Sciatic nerve (tissue), 2 donors: ENCODE measurements at regions of chr9 and their contacts with region 1.

Region 1: DNA sequence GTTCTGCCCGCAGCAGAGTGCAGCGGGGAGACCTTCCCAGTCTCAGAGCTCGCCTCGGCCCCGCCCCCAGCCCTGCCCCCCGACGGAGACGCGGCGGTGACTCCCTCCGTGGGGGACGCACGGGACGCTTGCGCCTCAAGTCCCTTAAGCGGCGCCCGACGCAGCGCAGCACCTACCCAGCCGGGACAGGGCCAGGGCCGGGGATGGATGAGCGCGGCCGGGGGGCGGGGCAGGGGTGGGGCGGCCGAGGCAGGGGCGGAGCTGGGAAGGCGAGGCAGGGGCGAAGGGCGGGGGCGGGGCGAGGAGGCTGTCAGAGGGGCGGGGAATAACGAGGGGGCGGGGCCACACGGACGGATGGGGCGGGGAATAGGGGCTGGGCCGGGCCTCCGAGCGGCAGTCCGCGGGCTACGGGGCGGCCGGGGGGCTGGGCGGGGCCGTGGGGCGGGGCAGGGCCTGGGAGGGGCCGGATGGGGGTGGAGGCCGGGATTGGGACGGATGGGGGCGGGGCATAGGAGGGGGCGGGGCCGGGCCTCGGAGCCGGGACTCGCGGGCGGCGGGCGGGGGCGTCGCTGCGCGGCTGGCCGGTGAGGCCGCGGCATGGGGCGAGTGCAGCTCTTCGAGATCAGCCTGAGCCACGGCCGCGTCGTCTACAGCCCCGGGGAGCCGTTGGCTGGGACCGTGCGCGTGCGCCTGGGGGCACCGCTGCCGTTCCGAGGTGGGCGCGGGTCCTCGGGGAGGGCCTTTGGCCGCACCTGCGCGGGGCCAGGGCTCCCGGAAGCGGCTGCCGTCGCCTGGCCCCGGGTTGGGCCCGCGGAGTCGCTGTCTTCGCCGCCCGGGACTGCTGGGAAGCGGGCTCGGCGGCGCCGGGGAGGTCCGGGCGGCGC is at the start of gene ARRDC1:
- DNase-seq: peak; percentile 95
- ATAC-seq: peak; percentile 89
- total RNA-seq, gene ARRDC1: 30.6 TPM

Region 2: DNA sequence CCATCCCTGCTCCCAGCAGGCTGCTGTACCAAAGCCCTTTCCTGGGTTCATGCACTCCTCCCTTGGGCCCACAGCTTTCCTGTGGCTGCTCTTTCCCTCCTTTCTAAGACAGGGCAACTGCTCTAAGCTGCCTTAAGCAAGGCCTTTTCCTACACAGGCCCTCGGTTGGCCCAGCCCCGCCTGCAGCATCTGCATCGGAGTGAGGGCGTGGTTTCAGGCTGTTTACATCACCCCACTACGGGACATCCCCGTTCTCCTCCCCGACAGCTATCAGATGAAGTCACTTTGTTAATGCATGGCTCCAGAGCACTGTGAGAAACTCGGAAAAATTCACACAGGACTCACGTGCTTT is 30.0 kb before region 1 on chr9:
- intact Hi-C with region 1: no loop called
- DNase-seq: no peak
- ATAC-seq: no peak

Region 3: DNA sequence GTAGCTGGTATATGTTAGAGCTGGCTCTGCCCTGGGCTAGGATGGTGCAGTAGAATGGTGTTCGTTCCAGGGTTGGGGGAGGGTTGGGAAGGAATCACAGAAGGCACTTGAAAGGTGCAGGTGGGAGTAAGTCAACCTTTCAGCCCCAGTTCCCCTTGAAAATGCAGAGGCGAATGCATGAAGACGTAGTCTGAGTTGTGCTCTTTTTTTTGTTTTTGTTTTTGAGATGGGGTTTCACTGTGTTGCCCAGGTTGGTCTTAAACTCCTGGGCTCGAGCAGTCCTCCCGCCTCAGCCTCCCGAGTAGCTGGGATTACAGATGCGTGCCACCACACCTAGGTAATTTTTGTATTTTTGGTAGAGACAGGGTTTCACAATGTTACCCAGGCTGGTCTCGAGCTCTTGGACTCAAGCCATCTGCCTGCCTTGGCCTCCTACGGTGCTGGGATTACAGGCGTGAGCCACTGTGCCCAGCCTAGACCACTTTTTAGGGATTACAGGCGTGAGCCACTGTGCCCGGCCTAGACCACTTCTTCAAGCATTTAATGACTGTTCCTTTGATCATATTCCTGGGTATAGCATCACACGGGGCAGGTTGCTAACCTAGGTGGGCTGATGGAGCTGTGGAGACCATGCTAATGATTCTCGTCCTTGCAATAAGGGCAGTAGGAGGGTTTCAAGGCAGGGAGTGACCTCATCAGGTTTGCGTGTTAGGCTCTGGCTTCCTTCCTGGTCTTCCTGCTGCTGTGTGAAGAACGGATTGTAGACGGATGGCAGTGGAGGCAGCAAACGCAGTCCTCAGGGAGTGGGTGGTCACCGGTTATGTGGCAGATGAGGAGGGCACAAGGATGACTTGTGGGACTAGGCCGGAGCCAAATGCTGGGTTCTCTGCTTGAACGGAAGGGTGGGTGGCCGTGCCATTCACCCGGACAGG is 27.1 kb after region 1 on chr9:
- intact Hi-C with region 1: loop called (anchors 1 kb)
- DNase-seq: peak; percentile 48
- ATAC-seq: no peak

Region 4: DNA sequence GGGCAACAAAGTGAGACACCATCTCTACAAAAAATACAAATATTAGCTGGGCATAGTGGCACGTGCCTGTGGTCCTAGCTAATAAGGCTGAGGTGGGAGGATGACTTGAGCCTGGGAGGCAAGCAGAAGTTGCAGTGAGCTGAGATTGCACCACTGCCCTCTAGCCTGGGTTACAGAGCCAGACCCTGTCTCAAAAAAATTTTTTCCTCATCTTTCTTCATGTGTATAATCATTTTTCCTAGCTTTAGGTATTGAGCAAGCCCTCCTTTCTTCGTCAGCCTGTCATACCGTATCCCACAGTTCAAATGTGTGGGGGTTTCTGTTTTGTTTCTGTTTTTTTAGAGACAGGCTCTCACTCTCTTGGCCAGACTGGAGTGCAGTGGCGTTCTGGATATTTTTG is 54.8 kb after region 1 on chr9:
- intact Hi-C with region 1: no loop called
- DNase-seq: no peak
- ATAC-seq: peak; percentile 39

Region 5: GRCh38 chr9:137672907-137673791 is 67.8 kb after region 1 on chr9:
- intact Hi-C with region 1: no loop called
- DNase-seq: no peak
- ATAC-seq: peak; percentile 83